Activated B cell treated with CpG ODN at 0.5 μM for 24 hours (primary cell): ENCODE measurements at regions of chr15 and their contacts with region 1.

Region 1: GRCh38 chr15:52466134-52466701 is 62.5 kb downstream of the MYO5A start:
- DNase-seq: peak; percentile 75
- ATAC-seq: peak; percentile 99
- H3K4me3 Mint-ChIP-seq: peak overlapping the region; percentile 25
- H3K27ac Mint-ChIP-seq: peak overlapping the region; percentile 91
- H3K4me1 Mint-ChIP-seq: peaks cover 52% of the 10 kb centered on the region
- H3K27me3 Mint-ChIP-seq: no peaks in the 10 kb centered on the region
- CTCF ChIP-seq: no peak

Region 2: GRCh38 chr15:52256366-52256765 is 209.9 kb before region 1 on chr15:
- CTCF ChIA-PET with region 1: interaction called, 7 read pairs
- POLR2A ChIA-PET with region 1: interaction called, 9 read pairs
- intact Hi-C with region 1: loop called (anchors 5 kb)
- DNase-seq: peak; percentile 46
- ATAC-seq: peak; percentile 78
- H3K4me3 Mint-ChIP-seq: peak overlapping the region; percentile 60
- H3K27ac Mint-ChIP-seq: peak overlapping the region; percentile 68
- H3K4me1 Mint-ChIP-seq: peaks cover 48% of the 10 kb centered on the region
- H3K27me3 Mint-ChIP-seq: no peaks in the 10 kb centered on the region
- CTCF ChIP-seq: no peak

Region 3: GRCh38 chr15:52343831-52344230 is 122.4 kb before region 1 on chr15:
- CTCF ChIA-PET with region 1: no interaction called
- POLR2A ChIA-PET with region 1: no interaction called
- intact Hi-C with region 1: no loop called
- DNase-seq: no peak
- ATAC-seq: no peak
- H3K4me3 Mint-ChIP-seq: no peak overlapping the region
- H3K27ac Mint-ChIP-seq: no peak overlapping the region
- H3K4me1 Mint-ChIP-seq: no peaks in the 10 kb centered on the region
- H3K27me3 Mint-ChIP-seq: no peaks in the 10 kb centered on the region
- CTCF ChIP-seq: no peak

Region 4: GRCh38 chr15:52379395-52380106 is 86.7 kb before region 1 on chr15:
- CTCF ChIA-PET with region 1: no interaction called
- POLR2A ChIA-PET with region 1: interaction called, 3 read pairs
- intact Hi-C with region 1: loop called (anchors 5 kb)
- DNase-seq: no peak
- ATAC-seq: peak; percentile 74
- H3K4me3 Mint-ChIP-seq: peak overlapping the region; percentile 47
- H3K27ac Mint-ChIP-seq: peak overlapping the region; percentile 82
- H3K4me1 Mint-ChIP-seq: peaks cover 28% of the 10 kb centered on the region
- H3K27me3 Mint-ChIP-seq: no peaks in the 10 kb centered on the region
- CTCF ChIP-seq: no peak

Region 5: GRCh38 chr15:52481915-52482314 is 15.7 kb after region 1 on chr15:
- CTCF ChIA-PET with region 1: interaction called, 14 read pairs
- POLR2A ChIA-PET with region 1: interaction called, 10 read pairs
- intact Hi-C with region 1: loop called (anchors 1 kb)
- DNase-seq: no peak
- ATAC-seq: peak; percentile 99
- H3K4me3 Mint-ChIP-seq: peak overlapping the region; percentile 7
- H3K27ac Mint-ChIP-seq: peak overlapping the region; percentile 85
- H3K4me1 Mint-ChIP-seq: peaks cover 57% of the 10 kb centered on the region
- H3K27me3 Mint-ChIP-seq: no peaks in the 10 kb centered on the region
- CTCF ChIP-seq: no peak

Region 6: GRCh38 chr15:52509500-52510245 is 43.5 kb after region 1 on chr15:
- CTCF ChIA-PET with region 1: no interaction called
- POLR2A ChIA-PET with region 1: no interaction called
- intact Hi-C with region 1: no loop called
- DNase-seq: no peak
- ATAC-seq: no peak
- H3K4me3 Mint-ChIP-seq: no peak overlapping the region
- H3K27ac Mint-ChIP-seq: peak overlapping the region; percentile 41
- H3K4me1 Mint-ChIP-seq: peaks cover 45% of the 10 kb centered on the region
- H3K27me3 Mint-ChIP-seq: no peaks in the 10 kb centered on the region
- CTCF ChIP-seq: no peak

Region 7: GRCh38 chr15:52558196-52558595 is 92.0 kb after region 1 on chr15:
- CTCF ChIA-PET with region 1: no interaction called
- POLR2A ChIA-PET with region 1: no interaction called
- intact Hi-C with region 1: loop called (anchors 2 kb)
- DNase-seq: no peak
- ATAC-seq: peak; percentile 96
- H3K4me3 Mint-ChIP-seq: no peak overlapping the region
- H3K27ac Mint-ChIP-seq: peak overlapping the region; percentile 65
- H3K4me1 Mint-ChIP-seq: peaks cover 55% of the 10 kb centered on the region
- H3K27me3 Mint-ChIP-seq: no peaks in the 10 kb centered on the region
- CTCF ChIP-seq: no peak

Region 8: DNA sequence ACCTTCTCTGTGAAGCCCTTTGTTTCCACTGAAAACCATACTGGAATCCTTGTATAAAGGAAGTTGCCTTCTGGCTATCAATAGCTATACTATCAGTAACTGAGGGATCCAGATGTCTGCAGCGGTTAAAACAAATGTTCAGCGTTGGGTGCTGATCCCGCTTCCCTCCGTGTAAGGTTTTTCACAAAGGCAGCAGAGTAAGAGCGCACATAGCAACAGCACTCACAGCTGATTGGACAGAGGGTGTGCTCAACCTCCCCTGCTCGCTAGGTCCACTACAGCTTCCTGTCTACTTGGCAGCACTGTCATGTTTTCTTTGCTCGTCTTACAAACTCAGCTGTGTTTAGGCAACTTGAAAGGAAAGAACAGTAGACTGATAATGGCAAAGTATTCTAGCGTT is 185.7 kb after region 1 on chr15:
- CTCF ChIA-PET with region 1: no interaction called
- POLR2A ChIA-PET with region 1: no interaction called
- intact Hi-C with region 1: no loop called
- DNase-seq: no peak
- ATAC-seq: peak; percentile 100
- H3K4me3 Mint-ChIP-seq: peak overlapping the region; percentile 38
- H3K27ac Mint-ChIP-seq: peak overlapping the region; percentile 46
- H3K4me1 Mint-ChIP-seq: peaks cover 13% of the 10 kb centered on the region
- H3K27me3 Mint-ChIP-seq: no peaks in the 10 kb centered on the region
- CTCF ChIP-seq: no peak

Region 9: DNA sequence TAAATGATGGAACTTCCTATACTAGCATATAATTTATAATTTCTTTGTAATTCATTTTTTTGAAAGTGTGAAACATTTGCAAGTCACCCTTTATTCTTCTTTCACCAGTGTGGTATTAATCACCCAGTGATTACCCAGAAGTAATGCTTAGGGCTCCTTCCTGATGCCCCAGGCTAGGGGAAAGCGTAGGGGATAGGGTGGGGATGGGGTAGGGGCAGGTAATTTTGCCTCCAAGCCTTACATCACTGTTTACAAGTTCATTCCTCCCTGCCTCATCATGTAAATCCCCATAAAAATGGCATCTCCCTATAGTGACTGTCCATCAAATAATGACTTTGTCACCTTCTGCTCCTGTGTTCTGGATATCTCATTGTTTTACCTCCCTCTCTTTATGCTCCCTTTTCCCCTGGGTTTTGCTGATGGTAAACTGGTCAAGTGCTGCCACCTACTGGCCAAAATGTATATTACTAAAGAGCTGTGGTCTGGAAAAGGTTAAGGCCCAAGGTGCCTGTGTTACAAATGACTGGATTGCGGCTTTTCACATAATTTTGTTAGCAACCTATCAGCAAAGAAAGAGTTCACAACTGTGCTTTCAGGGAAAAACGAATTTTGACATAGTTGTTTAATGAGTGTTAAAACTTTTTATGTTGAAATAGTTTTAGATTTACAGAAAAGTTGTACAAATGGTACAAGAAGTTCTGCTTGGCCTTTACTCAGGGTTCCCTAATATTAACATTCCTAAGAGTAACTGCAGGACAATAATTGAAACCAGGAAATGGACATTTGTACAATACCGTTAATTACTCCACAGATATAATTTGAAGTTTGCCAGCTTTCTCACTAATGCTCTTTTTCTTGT is 269.2 kb after region 1 on chr15:
- CTCF ChIA-PET with region 1: interaction called, 3 read pairs
- POLR2A ChIA-PET with region 1: interaction called, 3 read pairs
- intact Hi-C with region 1: loop called (anchors 1 kb)
- DNase-seq: no peak
- ATAC-seq: peak; percentile 84
- H3K4me3 Mint-ChIP-seq: no peak overlapping the region
- H3K27ac Mint-ChIP-seq: no peak overlapping the region
- H3K4me1 Mint-ChIP-seq: peaks cover 18% of the 10 kb centered on the region
- H3K27me3 Mint-ChIP-seq: no peaks in the 10 kb centered on the region
- CTCF ChIP-seq: no peak